Upper lobe of right lung (tissue), 1 donor: ENCODE measurements at regions of chr1 and their contacts with region 1.

Region 1: DNA sequence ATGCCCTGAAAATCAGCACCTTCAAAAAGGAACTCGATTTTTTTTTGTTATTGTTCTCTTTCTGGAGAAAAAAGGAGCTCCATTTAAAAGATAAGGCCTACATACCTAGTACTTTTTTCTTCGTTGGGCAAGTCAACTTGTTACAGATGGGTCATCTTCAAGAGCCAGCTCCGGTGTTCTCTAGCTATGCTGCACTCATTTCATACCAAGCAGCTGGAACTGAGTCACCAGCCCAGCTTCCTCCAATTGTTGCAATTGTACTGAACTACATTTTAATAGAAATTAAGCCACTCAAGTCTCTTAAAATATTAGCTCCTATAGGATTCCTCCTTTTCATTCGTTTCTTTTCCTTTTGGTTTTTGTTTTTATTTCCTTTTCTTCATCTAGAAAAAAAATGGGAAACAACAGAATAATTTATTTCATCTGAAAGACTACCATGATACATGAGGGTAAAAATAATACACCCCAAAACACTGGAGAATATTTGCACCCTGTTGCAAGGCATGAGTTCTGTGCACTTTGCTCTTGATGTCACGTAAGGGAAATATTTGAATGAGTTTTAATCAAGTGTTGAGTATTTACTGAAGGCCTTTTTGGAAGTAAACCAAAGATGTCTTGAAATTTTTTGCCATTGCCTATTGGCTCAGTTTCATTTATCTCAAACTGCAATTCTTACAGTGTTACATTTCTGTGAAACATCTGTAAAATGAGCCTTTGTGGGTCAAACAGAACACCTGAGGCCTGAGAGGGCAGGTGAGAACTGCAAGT is 60.5 kb downstream of the CLIC4 start:
- DNase-seq: no peak
- ATAC-seq: peak; percentile 74
- H3K4me3 ChIP-seq: no peak overlapping the region
- H3K27ac ChIP-seq: peak overlapping the region; percentile 28
- H3K4me1 ChIP-seq: peaks cover 55% of the 10 kb centered on the region
- H3K27me3 ChIP-seq: no peaks in the 10 kb centered on the region
- CTCF ChIP-seq: no peak

Region 2: GRCh38 chr1:24769656-24770651 is 35.8 kb before region 1 on chr1:
- intact Hi-C with region 1: loop called (anchors 10 kb)
- DNase-seq: no peak
- ATAC-seq: peak; percentile 69
- H3K4me3 ChIP-seq: no peak overlapping the region
- H3K27ac ChIP-seq: peak overlapping the region; percentile 32
- H3K4me1 ChIP-seq: peaks cover 47% of the 10 kb centered on the region
- H3K27me3 ChIP-seq: no peaks in the 10 kb centered on the region
- CTCF ChIP-seq: no peak